ENCODE measurements at regions of chr6 and their contacts with region 1.

Region 1: GRCh38 chr6:127471379-127472255 is 12.4 kb upstream of the KIAA0408 start:
- DNase-seq: no peak
- CTCF ChIP-seq: no peak

Region 2: GRCh38 chr6:127520066-127520465 is 48.4 kb after region 1 on chr6:
- in situ Hi-C with region 1: loop called (anchors 10 kb)
- DNase-seq: no peak
- CTCF ChIP-seq: no peak

Measured in GM13977 (cell line).